ENCODE measurements at regions of chrX and their contacts with region 1.

Region 1: GRCh38 chrX:130060122-130061069 is 49.9 kb downstream of the ELF4 start:
- DNase-seq: peak; percentile 64 to 93
- H3K4me3 ChIP-seq: peak overlapping the region; percentile 66
- H3K27ac ChIP-seq: no peak overlapping the region
- H3K4me1 ChIP-seq: no peaks in the 10 kb centered on the region
- H3K27me3 ChIP-seq: no peaks in the 10 kb centered on the region
- CTCF ChIP-seq: peak; percentile 93

Region 2: DNA sequence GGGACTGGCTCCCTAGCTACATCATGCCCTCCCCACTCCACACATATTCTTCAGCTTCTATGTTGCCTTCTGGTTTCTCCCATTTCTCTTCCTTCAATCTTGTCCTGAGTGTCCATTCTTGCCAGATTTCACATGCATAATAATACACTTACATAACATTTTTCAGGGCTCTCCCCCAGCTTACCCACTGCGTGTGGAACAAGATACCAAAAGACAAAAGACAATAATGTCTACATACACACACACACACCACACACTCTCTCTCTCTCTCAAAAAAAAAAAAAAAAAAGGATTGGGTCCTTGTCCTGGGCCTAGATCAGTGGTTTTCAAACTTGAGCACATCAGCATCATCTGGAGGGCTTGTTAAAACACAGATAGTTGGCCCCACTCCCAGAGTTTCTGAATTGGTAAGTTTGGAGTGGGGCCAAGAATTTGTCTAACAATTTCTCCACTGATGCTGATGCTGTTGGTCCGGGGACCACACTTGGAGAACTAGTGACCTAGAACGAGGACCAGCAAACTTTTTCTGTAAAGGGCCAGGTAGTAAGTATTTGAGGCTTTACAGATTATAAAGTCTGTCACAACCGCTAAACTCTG is 530.6 kb before region 1 on chrX:
- CTCF ChIA-PET with region 1: no interaction called
- POLR2A ChIA-PET with region 1: no interaction called
- intact Hi-C with region 1: no loop called
- DNase-seq: no peak
- H3K4me3 ChIP-seq: no peak overlapping the region
- H3K27ac ChIP-seq: no peak overlapping the region
- H3K4me1 ChIP-seq: no peaks in the 10 kb centered on the region
- H3K27me3 ChIP-seq: no peaks in the 10 kb centered on the region
- CTCF ChIP-seq: no peak

Region 3: GRCh38 chrX:129600981-129601424 is 459.4 kb before region 1 on chrX:
- CTCF ChIA-PET with region 1: interaction called, 14 read pairs
- POLR2A ChIA-PET with region 1: no interaction called
- intact Hi-C with region 1: no loop called
- DNase-seq: no peak
- H3K4me3 ChIP-seq: no peak overlapping the region
- H3K27ac ChIP-seq: no peak overlapping the region
- H3K4me1 ChIP-seq: peaks cover 6% of the 10 kb centered on the region; the same call in 1 of the 2 replicates
- H3K27me3 ChIP-seq: no peaks in the 10 kb centered on the region
- CTCF ChIP-seq: peak; percentile 78

Region 4: DNA sequence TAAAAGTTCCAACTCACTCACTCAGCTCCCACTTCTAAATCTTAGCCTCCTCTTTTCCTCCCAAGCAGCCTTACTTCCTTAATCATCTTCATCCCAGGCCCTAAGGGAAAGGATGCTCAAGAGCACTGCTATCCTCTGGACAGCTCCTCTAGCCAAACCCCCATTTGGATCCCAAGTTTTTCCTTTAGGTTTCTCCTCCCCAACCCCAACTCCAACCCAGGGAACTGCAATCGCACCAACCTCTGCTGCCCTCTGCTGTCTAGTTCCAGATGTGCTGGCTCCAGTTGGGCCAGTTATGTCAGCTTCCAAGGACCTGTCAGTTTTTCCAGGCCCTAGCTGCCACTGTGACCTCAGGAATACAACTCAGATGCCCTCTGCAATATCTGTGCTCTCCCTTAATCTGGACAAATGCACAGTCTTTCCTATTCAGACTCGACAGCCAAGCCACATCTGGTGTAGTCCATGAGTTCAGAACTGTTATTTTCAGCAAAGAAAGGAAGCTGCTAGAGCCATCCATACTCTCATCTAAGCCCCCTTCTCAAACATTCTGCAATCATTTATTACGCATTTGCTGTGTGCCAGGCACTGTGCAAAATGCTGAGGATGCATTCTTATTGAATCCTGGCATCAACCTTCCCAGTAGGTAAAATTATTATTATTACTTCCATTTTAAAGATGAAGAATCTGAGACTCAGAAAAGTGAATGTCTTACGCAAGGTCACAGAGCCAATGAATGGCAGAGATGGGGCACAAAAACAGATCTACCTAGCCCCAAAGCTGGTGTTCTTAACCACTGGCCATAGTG is 333.9 kb before region 1 on chrX:
- CTCF ChIA-PET with region 1: interaction called, 8 read pairs
- POLR2A ChIA-PET with region 1: no interaction called
- intact Hi-C with region 1: loop called (anchors 1 kb)
- DNase-seq: peak in 1 of 2 experiments; percentile 74
- H3K4me3 ChIP-seq: no peak overlapping the region
- H3K27ac ChIP-seq: no peak overlapping the region
- H3K4me1 ChIP-seq: 0 out of 2 replicates have a peak, but pooled peaks cover 4% of the 10 kb centered on the region
- H3K27me3 ChIP-seq: no peaks in the 10 kb centered on the region
- CTCF ChIP-seq: peak; percentile 88

Region 5: GRCh38 chrX:129925305-129926092 is 134.9 kb before region 1 on chrX:
- CTCF ChIA-PET with region 1: interaction called, 9 read pairs
- POLR2A ChIA-PET with region 1: no interaction called
- intact Hi-C with region 1: loop called (anchors 1 kb)
- DNase-seq: peak; percentile 63 to 64
- H3K4me3 ChIP-seq: no peak overlapping the region
- H3K27ac ChIP-seq: peak overlapping the region; percentile 27
- H3K4me1 ChIP-seq: peaks cover 10% of the 10 kb centered on the region
- H3K27me3 ChIP-seq: no peaks in the 10 kb centered on the region
- CTCF ChIP-seq: peak; percentile 83

Region 6: DNA sequence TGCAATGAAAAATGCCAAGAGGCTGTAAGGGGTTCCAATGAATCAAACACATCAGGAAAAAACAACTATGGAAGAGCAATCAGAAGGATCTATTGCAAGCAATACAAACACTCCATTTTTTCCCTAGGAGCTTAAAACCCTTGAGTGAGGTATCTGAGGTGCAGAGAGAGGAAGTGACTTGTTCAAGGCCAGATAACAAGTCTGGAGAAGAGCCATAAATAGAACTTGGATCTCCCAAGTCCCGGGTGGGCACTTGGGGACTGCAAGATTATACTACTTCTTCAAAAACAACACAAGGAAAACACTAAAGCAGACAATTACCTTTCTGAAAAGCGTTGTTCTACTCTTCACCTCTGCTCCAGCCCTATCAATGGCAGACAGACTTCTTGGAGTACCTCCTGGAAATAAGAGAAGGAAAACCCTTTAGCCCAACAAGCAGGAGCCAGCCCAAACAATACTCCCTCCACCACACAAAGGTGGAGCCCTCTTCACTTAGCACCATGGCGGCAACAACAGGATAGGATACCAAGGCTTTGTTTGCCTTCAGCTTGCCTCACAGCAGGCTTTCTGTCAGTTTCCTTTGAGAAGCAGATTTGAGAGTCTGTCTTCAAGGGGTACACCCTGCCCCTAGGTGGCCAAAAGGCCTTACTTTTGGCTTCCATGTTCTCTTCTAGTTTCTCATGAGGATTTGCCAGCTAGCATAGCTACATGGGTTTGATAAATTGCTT is 79.2 kb after region 1 on chrX:
- CTCF ChIA-PET with region 1: no interaction called
- POLR2A ChIA-PET with region 1: no interaction called
- intact Hi-C with region 1: no loop called
- DNase-seq: no peak
- H3K4me3 ChIP-seq: no peak overlapping the region
- H3K27ac ChIP-seq: no peak overlapping the region
- H3K4me1 ChIP-seq: no peaks in the 10 kb centered on the region
- H3K27me3 ChIP-seq: no peaks in the 10 kb centered on the region
- CTCF ChIP-seq: no peak

Region 7: DNA sequence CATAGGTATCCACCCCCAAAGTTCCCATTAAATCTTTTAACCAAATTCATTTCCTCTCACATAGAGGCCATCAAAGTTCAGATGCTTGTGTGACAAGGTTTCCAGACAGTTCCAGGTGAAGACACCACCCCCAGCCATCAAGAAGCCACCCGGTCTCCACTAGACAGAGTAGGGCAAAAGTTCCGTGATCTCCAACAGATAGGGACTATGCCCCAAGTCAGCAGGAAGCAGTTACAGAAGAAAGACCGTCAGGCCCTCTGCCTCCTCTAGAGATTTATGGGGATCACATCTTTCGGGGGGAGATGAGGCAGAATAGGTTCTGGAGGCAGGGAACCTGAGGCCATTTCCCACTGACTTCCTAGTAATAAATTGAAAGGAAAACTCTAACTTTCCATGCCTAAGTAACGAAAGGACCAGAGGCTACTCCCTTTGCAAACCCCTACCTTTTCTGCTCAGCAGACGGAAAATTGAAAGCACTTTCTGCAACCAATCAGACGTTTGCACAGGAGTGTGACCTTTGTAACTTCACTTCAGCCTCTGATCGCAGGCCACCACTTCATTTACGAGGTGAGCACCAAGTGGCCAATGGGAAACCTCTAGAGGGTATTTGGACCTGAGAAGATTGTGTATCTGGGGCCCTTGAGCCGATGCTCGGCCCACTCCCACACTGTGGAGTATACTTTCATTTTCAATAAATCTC is 226.8 kb after region 1 on chrX:
- CTCF ChIA-PET with region 1: no interaction called
- POLR2A ChIA-PET with region 1: no interaction called
- intact Hi-C with region 1: no loop called
- DNase-seq: no peak
- H3K4me3 ChIP-seq: no peak overlapping the region
- H3K27ac ChIP-seq: no peak overlapping the region
- H3K4me1 ChIP-seq: no peaks in the 10 kb centered on the region
- H3K27me3 ChIP-seq: no peaks in the 10 kb centered on the region
- CTCF ChIP-seq: no peak

Region 8: DNA sequence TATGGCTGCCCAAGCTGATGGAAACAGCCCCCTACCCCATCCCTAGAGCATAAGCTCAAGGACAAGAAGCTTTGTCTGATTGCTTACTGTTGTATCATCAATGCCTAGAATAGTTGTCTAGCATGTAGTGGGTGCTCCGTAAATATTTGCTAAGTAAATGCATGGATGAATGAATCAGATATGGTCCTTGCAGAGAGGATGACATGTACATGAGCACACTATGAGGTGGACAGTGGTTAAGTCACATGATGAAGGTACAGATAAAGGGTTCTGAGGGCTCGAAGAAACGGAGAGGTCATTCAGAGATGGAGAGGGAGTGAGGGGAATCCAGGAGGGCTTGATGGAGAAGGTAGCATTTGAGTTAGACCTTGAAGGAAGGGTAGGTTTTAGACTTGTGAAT is 555.5 kb after region 1 on chrX:
- CTCF ChIA-PET with region 1: interaction called, 12 read pairs
- POLR2A ChIA-PET with region 1: no interaction called
- intact Hi-C with region 1: no loop called
- DNase-seq: no peak
- H3K4me3 ChIP-seq: no peak overlapping the region
- H3K27ac ChIP-seq: no peak overlapping the region
- H3K4me1 ChIP-seq: no peaks in the 10 kb centered on the region
- H3K27me3 ChIP-seq: no peaks in the 10 kb centered on the region
- CTCF ChIP-seq: no peak

Region 9: GRCh38 chrX:130857207-130857606 is 796.8 kb after region 1 on chrX:
- CTCF ChIA-PET with region 1: no interaction called
- POLR2A ChIA-PET with region 1: no interaction called
- intact Hi-C with region 1: no loop called
- DNase-seq: no peak
- H3K4me3 ChIP-seq: no peak overlapping the region
- H3K27ac ChIP-seq: no peak overlapping the region
- H3K4me1 ChIP-seq: no peaks in the 10 kb centered on the region
- H3K27me3 ChIP-seq: no peaks in the 10 kb centered on the region
- CTCF ChIP-seq: no peak

Measured in PC-9 (cell line).